PC-3 (cell line): ENCODE measurements at regions of chr11 and their contacts with region 1.

Region 1: DNA sequence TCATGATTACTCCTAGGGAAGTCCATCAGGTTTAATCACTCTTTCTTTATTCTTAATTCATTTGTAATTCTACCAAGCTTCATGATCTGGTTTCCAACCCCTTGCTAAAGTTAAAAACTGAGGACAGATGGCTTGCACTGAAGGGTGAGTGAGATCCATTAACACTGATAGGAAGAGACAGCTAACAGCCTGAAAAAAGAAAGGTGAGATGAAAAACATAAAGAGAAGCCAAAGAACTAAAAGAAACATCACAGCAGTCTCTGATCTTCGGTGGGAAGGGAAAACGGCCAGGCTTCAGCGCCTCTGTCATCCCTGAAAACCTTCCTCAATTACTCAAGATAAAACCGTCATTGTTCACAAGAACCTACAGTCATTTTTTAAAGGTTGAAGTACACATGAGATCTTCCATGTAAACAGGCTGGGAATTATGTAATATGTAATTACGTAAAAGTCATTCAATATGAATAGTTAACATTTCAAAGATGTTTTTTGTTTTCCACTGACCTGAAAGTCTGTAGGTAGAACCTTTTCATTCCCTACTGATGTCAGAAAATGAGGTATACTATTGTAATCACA is 41.3 kb downstream of the VSIG10L2 start:
- DNase-seq: no peak
- ATAC-seq: no peak
- H3K4me3 ChIP-seq: no peak overlapping the region
- H3K27ac ChIP-seq: no peak overlapping the region
- H3K4me1 ChIP-seq: peaks cover 14% of the 10 kb centered on the region
- H3K27me3 ChIP-seq: no peaks in the 10 kb centered on the region
- CTCF ChIP-seq: no peak

Region 2: GRCh38 chr11:125887373-125888324 is 99.5 kb before region 1 on chr11 and contains the start of gene HYLS1:
- CTCF ChIA-PET with region 1: no interaction called
- POLR2A ChIA-PET with region 1: no interaction called
- intact Hi-C with region 1: no loop called
- DNase-seq: peak; percentile 99
- ATAC-seq: peak; percentile 83
- H3K4me3 ChIP-seq: peak within 1 kb of the TSS; percentile 83
- H3K27ac ChIP-seq: peak within 1 kb of the TSS; percentile 87
- H3K4me1 ChIP-seq: peaks cover 59% of the 10 kb centered on the region
- H3K27me3 ChIP-seq: no peaks in the 10 kb centered on the region
- CTCF ChIP-seq: peak; percentile 39
- total RNA-seq, gene HYLS1: 16.4 and 23.5 TPM in 2 replicates

Region 3: DNA sequence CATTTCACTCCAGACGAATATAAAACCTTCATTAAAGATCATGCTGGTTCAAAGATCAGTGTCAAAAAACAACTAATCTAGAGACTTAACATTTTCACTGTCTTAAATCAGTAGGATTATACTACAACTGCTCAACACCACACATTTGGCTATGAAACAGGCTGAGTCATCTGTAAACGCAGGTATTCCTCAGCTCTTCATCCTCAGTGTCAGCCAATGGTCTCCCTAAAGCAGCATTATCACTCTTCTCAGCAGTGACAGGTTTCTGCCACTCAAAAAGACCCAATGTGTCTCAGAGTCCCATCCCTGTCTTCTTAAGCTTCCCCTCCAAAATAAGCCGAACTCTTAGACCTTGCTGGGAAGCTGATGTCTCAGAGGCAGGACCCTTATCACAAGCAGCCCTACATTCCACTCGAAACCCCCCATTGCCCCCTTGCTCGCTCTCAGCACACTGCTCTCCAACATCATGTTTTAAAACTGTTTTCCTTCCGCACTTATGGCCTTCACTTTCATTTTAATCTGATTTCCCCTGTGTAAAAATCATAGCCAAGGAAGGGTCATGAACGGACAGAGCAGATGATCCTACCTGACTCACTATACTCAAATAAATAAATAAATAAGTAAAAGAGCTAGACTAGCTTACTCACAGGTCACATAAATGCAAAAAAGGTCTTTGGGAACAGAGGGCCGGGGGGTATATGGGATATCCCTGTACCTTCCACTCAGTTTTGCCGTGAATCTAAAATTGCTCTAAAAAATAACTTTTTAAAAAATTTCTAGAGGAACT is 52.5 kb after region 1 on chr11:
- CTCF ChIA-PET with region 1: no interaction called
- POLR2A ChIA-PET with region 1: no interaction called
- intact Hi-C with region 1: loop called (anchors 10 kb)
- DNase-seq: peak; percentile 75
- ATAC-seq: peak; percentile 96
- H3K4me3 ChIP-seq: peak overlapping the region; percentile 43
- H3K27ac ChIP-seq: peak overlapping the region; percentile 50
- H3K4me1 ChIP-seq: peaks cover 18% of the 10 kb centered on the region
- H3K27me3 ChIP-seq: no peaks in the 10 kb centered on the region
- CTCF ChIP-seq: no peak